ENCODE measurements at regions of chr17 and their contacts with region 1.

Region 1: DNA sequence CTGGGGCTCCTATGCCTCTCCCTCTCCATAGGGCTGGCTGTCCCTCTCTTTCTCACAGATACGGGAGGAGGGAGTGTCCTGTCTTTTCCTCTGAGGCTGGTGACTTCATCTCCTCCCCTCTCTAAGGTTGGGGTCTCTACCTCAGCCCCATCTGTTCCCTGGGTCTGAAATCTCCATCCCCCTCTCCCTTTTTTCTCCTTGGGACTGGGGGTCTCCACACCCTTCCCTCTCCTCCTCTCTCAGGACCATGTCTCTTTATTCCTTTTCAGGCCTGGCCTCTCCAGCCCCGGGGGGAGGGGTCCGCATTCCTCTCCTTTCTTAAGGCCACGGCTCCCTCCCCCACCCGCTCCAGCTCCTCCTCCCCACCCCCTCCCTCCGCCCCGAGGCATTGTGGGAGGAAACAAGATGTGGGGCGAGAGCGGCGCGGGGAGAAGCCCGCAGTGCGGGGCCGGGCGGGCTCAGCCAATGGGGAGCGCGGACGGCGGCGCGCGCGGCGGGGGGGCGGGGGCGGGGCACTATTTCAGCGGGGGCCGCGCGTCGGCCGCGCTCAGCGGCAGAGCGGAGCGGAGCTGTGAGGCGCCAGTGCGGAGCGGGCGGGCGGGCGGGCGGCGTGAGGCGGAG is at the start of gene DYNLL2:
- DNase-seq: peak; percentile 87 to 96 (median 94)
- ATAC-seq: peak; percentile 92
- H3K4me3 ChIP-seq: peak within 1 kb of the TSS; percentile 96 to 97
- H3K27ac ChIP-seq: peak within 1 kb of the TSS; percentile 88 to 92
- H3K4me1 ChIP-seq: peaks cover 9 to 35% of the 10 kb centered on the region in 2 donors
- H3K27me3 ChIP-seq: no peaks in the 10 kb centered on the region
- CTCF ChIP-seq: no peak
- polyA plus RNA-seq, gene DYNLL2: 52.8 to 70.8 (median 61.4) TPM

Region 2: DNA sequence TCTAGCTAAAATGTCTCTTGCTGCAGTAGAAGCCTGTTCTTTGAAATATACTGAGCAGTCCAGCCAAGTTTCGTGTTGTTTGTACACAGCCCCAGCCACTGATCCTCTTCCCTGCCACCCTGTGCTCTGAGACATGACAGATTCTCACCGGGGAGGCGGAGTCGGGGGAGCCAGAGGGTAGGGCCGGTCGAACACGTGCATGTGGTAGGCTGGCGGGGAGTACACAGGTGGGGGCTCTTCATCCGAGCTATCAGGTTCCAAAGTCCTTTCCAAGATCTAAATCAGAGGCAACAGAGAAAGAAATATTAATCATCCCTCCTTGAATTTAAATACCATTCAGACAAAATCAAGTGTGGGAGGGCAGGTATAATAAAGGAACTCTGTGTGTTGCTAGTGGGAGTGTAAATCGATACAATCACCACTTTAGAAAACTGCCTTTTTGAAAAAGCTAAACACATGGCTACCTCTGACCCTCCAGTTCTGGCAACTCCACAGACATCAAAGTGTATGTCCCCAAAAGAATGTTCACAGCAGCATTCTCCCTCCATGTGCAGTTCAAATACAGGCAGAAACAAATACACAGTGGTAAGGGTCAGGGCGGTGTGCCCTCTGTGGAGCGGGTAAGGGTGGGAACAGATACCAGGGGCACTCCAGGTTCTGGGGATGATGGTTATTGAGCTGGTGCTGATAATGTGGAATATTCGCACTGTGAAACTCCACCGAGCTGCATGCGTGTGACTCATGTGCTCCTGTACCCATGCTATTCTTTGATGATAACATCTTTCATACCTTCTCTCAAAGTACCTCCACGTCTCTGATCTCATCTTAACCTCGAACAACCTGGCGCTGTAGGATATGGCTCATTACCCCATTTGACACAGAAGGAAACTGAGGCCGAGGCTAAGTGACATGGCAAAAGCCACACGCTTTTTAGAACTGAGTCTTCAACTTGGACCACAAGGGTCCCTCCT is 203.2 kb before region 1 on chr17:
- intact Hi-C with region 1: no loop called
- DNase-seq: peak in 1 of 4 donors; percentile 45
- ATAC-seq: no peak
- H3K4me3 ChIP-seq: no peak overlapping the region
- H3K27ac ChIP-seq: peak overlapping the region in 1 of 2 donors; percentile 41
- H3K4me1 ChIP-seq: peaks cover 21 to 23% of the 10 kb centered on the region in 2 donors
- H3K27me3 ChIP-seq: no peaks in the 10 kb centered on the region
- CTCF ChIP-seq: no peak

Region 3: DNA sequence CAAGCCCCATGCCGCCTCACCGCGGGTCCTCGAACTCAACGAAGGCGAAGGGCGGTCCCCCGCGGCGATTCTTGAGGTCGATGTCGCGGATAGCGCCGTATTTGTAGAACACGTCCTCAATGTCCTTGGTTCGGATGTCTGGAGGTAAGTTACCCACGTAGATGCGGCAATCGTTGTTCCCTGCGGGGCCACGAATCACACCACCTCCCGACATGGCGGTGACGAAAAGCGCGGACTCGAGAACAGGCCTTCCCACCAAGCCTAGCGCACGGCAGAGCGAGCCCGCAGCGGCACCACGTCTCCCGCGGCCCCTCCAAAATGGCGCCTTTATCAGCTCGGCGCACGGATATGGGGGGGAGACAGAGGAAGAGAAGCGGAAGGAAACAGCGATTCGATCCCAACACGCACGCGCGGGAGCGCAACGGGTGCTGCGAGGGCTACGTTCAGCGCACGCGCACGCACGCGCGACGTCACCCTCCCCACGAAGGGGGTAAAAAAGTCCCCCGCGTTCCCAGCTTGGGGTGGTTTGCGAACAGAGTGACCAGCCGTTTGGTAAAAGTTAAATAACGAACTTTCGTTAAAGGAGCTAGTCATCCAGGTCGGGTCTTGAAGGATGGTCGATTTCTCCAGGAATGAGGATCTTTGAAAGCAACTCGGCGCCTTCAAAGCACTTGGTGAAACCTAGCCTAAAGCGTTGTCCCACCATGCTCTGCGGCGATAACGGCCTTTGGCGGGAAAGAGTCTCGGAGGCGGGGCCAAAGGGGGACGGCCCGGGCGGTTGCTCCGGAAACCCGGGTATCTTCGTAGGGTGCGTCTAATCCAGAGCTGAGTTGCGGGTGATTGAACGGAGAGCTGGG is 75.8 kb before region 1 on chr17 and contains the start of gene SRSF1:
- intact Hi-C with region 1: loop called in 1 of 2 experiments (anchors 10 kb)
- DNase-seq: peak; percentile 97 to 99 (median 99)
- ATAC-seq: peak; percentile 96
- H3K4me3 ChIP-seq: peak within 1 kb of the TSS; percentile 95 to 97
- H3K27ac ChIP-seq: peak within 1 kb of the TSS; percentile 95 to 97
- H3K4me1 ChIP-seq: peaks cover 17 to 49% of the 10 kb centered on the region in 2 donors
- H3K27me3 ChIP-seq: no peaks in the 10 kb centered on the region
- CTCF ChIP-seq: no peak
- polyA plus RNA-seq, gene SRSF1: 305 to 393 (median 368) TPM

Measured in left lung (tissue), 14 donors.